Dorsolateral prefrontal cortex (tissue), 120 donors: ENCODE measurements at regions of chr12 and their contacts with region 1.

Region 1: GRCh38 chr12:128259556-128260070 is 7.4 kb upstream of the TMEM132C start:
- DNase-seq: peak in 8 of 10 donors; percentile 51 to 77 (median 58)
- H3K4me3 ChIP-seq: peak overlapping the region in 38 of 59 donors; percentile 0 to 51 (median 30)
- H3K27ac ChIP-seq: peak overlapping the region in 55 of 59 donors; percentile 9 to 95 (median 83)
- H3K27me3 ChIP-seq: no peaks in the 10 kb centered on the region
- CTCF ChIP-seq: peak; percentile 77 to 95 (median 87)

Region 2: GRCh38 chr12:128298091-128298748 is 38.6 kb after region 1 on chr12:
- intact Hi-C with region 1: no loop called
- DNase-seq: no peak
- H3K4me3 ChIP-seq: no peak overlapping the region
- H3K27ac ChIP-seq: no peak overlapping the region
- H3K27me3 ChIP-seq: peaks cover 0 to 6% (median 0%) of the 10 kb centered on the region in 45 donors
- CTCF ChIP-seq: no peak

Region 3: DNA sequence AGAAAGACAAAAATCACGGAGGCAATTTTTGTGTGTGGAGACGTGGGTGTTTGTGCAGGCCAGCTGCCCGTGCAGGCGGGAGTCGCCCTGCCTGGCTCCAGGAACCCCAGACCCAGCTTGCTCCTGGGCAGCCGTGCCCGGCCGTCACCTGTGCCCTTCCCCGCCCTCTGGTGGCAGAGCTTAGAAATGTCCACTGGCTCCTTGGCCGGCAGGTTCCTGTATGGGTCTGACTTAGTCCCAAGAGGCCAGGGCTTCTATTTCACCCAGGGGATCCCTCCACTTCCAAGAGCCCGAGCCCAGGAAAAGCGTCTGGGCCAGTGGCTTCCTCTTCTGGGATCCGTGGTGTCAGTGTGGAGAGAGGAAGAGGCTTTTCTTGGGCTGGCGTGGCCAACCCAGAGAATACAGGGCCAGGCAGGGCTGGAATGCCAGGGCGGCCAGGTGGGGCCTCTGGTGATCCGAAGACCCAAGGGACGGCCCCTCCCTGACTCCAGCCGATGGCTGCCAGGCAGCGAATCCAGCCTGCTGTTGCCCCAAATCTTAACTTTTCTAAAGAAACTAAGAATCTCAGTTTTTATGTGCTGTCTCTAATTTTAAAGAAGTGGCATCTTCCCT is 128.3 kb after region 1 on chr12:
- intact Hi-C with region 1: loop called in 1 of 2 experiments (anchors 1 kb)
- DNase-seq: peak in 8 of 10 donors; percentile 38 to 78 (median 59)
- H3K4me3 ChIP-seq: peak overlapping the region in 2 of 59 donors; percentile 21 to 33
- H3K27ac ChIP-seq: peak overlapping the region in 50 of 59 donors; percentile 1 to 76 (median 45)
- H3K27me3 ChIP-seq: peaks cover 0 to 14% (median 0%) of the 10 kb centered on the region in 45 donors
- CTCF ChIP-seq: peak; percentile 41 to 87 (median 76)

Region 4: GRCh38 chr12:128543460-128543859 is 283.8 kb after region 1 on chr12:
- intact Hi-C with region 1: loop called in 1 of 2 experiments (anchors 1 kb)
- DNase-seq: no peak
- H3K4me3 ChIP-seq: no peak overlapping the region
- H3K27ac ChIP-seq: no peak overlapping the region
- H3K27me3 ChIP-seq: peaks cover 0 to 7% (median 0%) of the 10 kb centered on the region in 45 donors
- CTCF ChIP-seq: peak in 28 of 56 donors; percentile 7 to 55 (median 30)

Region 5: GRCh38 chr12:128797119-128798118 is 537.8 kb after region 1 on chr12:
- intact Hi-C with region 1: loop called (anchors 10 kb)
- DNase-seq: no peak
- H3K4me3 ChIP-seq: no peak overlapping the region
- H3K27ac ChIP-seq: peak overlapping the region in 34 of 59 donors; percentile 3 to 72 (median 30)
- H3K27me3 ChIP-seq: no peaks in the 10 kb centered on the region
- CTCF ChIP-seq: no peak

Region 6: GRCh38 chr12:130013771-130014484 is 1754.3 kb after region 1 on chr12:
- intact Hi-C with region 1: loop called in 1 of 2 experiments (anchors 10 kb)
- DNase-seq: peak; percentile 67 to 91 (median 88)
- H3K4me3 ChIP-seq: peak overlapping the region in 56 of 59 donors; percentile 5 to 58 (median 38)
- H3K27ac ChIP-seq: peak overlapping the region in 16 of 59 donors; percentile 9 to 70 (median 42)
- H3K27me3 ChIP-seq: peaks cover 0 to 5% (median 0%) of the 10 kb centered on the region in 45 donors
- CTCF ChIP-seq: peak; percentile 54 to 90 (median 78)